CD8-positive, alpha-beta T cell (primary cell): ENCODE measurements at regions of chr11 and their contacts with region 1.

Region 1: DNA sequence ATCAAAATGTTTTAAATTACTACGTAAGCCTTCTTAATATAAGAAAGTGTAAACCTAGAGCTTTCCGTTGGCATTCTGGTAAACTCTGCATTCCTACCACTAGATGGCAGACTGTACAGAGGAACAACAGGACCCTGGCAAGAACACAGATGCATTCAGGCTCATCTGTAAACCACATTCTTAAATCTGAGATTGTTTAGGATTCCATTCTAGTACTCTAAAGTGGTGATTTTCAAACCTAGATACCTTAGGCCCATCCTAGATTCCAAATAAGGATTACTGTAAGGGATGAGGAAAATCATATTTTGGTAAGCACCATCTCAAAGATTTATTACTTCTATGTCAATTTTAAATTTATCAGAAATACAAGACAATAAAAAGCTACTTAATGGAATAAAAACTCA is 26.9 kb downstream of the PICALM start:
- DNase-seq: peak in 6 of 9 experiments; percentile 30 to 89 (median 43)
- ATAC-seq: peak; percentile 94
- H3K4me3 ChIP-seq: no peak overlapping the region
- H3K4me3 Mint-ChIP-seq: no peak overlapping the region
- H3K27ac ChIP-seq: peak overlapping the region in 1 of 2 experiments; percentile 47
- H3K27ac Mint-ChIP-seq: peak overlapping the region; percentile 66
- H3K4me1 ChIP-seq: peaks cover 46% of the 10 kb centered on the region
- H3K4me1 Mint-ChIP-seq: peaks cover 65% of the 10 kb centered on the region
- H3K27me3 ChIP-seq: no peaks in the 10 kb centered on the region
- H3K27me3 Mint-ChIP-seq: no peaks in the 10 kb centered on the region
- CTCF ChIP-seq: peak; percentile 67

Region 2: GRCh38 chr11:86021377-86021776 is 20.6 kb before region 1 on chr11:
- CTCF ChIA-PET with region 1: interaction called, 6 read pairs
- POLR2A ChIA-PET with region 1: interaction called, 3 read pairs
- intact Hi-C with region 1: loop called in 1 of 2 experiments (anchors 2 kb)
- DNase-seq: peak in 1 of 9 experiments; percentile 32
- ATAC-seq: no peak
- H3K4me3 ChIP-seq: no peak overlapping the region
- H3K4me3 Mint-ChIP-seq: no peak overlapping the region
- H3K27ac ChIP-seq: peak overlapping the region in 1 of 2 experiments; percentile 18
- H3K27ac Mint-ChIP-seq: peak overlapping the region; percentile 49
- H3K4me1 ChIP-seq: no peaks in the 10 kb centered on the region
- H3K4me1 Mint-ChIP-seq: peaks cover 34% of the 10 kb centered on the region
- H3K27me3 ChIP-seq: no peaks in the 10 kb centered on the region
- H3K27me3 Mint-ChIP-seq: no peaks in the 10 kb centered on the region
- CTCF ChIP-seq: no peak

Region 3: GRCh38 chr11:86202013-86202336 is 160.0 kb after region 1 on chr11:
- CTCF ChIA-PET with region 1: interaction called, 211 read pairs
- POLR2A ChIA-PET with region 1: interaction called, 3 read pairs
- intact Hi-C with region 1: no loop called
- DNase-seq: peak in 2 of 9 experiments; percentile 8 to 41
- ATAC-seq: peak; percentile 64
- H3K4me3 ChIP-seq: peak overlapping the region; percentile 26 to 46
- H3K4me3 Mint-ChIP-seq: no peak overlapping the region
- H3K27ac ChIP-seq: peak overlapping the region in 1 of 2 experiments; percentile 22
- H3K27ac Mint-ChIP-seq: no peak overlapping the region
- H3K4me1 ChIP-seq: peaks cover 5% of the 10 kb centered on the region
- H3K4me1 Mint-ChIP-seq: no peaks in the 10 kb centered on the region
- H3K27me3 ChIP-seq: no peaks in the 10 kb centered on the region
- H3K27me3 Mint-ChIP-seq: no peaks in the 10 kb centered on the region
- CTCF ChIP-seq: no peak

Region 4: DNA sequence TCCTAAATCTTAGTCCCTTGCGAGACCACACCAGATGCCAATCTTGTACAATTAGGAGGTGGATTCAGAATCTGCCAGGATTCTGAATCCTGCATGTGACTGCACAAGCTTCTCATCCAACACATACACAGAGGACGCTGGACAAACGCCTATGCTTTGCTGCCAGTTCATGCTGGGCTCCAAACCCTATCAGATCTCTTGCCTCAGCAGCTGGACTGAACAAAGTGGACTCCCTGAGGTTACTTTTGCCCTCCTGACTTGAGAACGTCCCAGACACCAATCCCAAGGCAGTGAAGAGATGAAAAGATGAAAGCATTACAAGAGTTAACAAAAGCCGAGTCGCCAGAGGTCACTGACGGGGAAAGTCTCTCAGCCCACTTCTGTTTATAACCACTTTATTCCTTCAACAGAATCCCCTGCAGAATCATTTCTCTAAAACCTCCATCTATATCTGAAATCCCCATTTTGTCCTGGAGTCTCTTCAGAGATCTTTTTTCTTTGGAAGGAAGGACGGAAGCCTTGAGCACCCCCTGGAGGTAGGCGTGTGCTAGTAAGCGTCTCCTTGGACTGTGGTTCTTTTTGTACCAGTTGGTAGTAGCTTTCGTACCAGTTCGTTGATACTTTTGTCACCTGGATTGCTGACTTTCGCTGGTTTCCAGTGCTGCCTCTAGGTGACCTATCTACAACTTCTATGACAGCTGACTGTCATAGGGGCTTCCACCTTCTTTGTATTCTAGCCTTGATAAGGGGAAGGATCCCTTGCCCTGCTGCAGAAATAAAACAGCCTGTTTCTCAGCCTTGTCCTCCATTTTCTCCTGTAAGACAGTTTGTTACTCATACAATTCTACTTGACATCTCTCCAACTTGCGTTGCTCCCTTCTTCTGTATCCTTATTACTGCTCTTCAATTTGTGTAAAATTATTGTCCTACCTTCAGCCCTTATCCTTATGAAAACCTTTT is 176.4 kb after region 1 on chr11:
- CTCF ChIA-PET with region 1: interaction called, 24 read pairs
- POLR2A ChIA-PET with region 1: interaction called, 3 read pairs
- intact Hi-C with region 1: loop called (anchors 1 kb)
- DNase-seq: peak; percentile 17 to 81 (median 59)
- ATAC-seq: peak; percentile 93
- H3K4me3 ChIP-seq: peak overlapping the region in 1 of 2 experiments; percentile 38
- H3K4me3 Mint-ChIP-seq: peak overlapping the region; percentile 61
- H3K27ac ChIP-seq: no peak overlapping the region
- H3K27ac Mint-ChIP-seq: no peak overlapping the region
- H3K4me1 ChIP-seq: no peaks in the 10 kb centered on the region
- H3K4me1 Mint-ChIP-seq: peaks cover 2% of the 10 kb centered on the region
- H3K27me3 ChIP-seq: no peaks in the 10 kb centered on the region
- H3K27me3 Mint-ChIP-seq: peaks cover 7% of the 10 kb centered on the region
- CTCF ChIP-seq: peak; percentile 74

Region 5: GRCh38 chr11:86291466-86292262 is 249.7 kb after region 1 on chr11:
- CTCF ChIA-PET with region 1: interaction called, 5 read pairs
- POLR2A ChIA-PET with region 1: no interaction called
- intact Hi-C with region 1: loop called (anchors 1 to 2 kb)
- DNase-seq: peak; percentile 21 to 74 (median 60)
- ATAC-seq: peak; percentile 67
- H3K4me3 ChIP-seq: no peak overlapping the region
- H3K4me3 Mint-ChIP-seq: no peak overlapping the region
- H3K27ac ChIP-seq: no peak overlapping the region
- H3K27ac Mint-ChIP-seq: no peak overlapping the region
- H3K4me1 ChIP-seq: no peaks in the 10 kb centered on the region
- H3K4me1 Mint-ChIP-seq: peaks cover 13% of the 10 kb centered on the region
- H3K27me3 ChIP-seq: no peaks in the 10 kb centered on the region
- H3K27me3 Mint-ChIP-seq: no peaks in the 10 kb centered on the region
- CTCF ChIP-seq: peak; percentile 73